Activated CD4-positive, alpha-beta T cell treated with anti-CD3 and anti-CD28 coated beads for 36 hours (primary cell): ENCODE measurements at regions of chr7 and their contacts with region 1.

Region 1: DNA sequence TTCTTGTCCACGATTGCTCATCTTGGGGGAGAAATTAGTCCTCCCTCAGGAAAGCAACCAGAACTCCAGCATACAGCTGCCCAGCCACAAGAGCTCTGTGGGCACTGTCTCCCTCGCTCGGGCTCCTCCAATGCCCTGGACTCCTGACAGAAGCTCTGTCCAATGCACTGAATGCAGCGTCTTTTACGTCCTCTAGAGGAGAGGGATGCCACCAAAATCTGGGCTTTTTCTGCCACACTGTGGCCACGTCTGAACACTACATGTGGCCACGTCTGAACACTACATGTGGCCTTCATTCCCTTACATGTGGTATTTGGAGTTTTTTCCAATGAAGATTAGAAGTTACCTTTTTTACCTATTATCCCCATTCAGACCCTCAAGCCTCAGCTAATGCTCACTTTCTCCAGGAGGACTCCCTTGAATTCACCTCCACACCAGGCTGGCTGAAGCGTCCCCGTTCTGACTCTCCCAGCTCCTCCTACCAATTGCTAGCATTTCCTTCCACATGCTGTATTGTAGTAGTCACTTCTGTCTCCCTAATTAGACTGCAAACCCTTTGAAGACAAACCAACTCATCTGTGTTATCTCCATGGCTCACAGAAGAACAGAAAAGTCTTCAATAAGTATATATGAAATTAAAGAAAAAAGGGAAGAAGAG is 134.3 kb upstream of the PDE1C start:
- DNase-seq: peak; percentile 34
- ATAC-seq: no peak
- H3K4me3 Mint-ChIP-seq: no peak overlapping the region
- H3K27ac Mint-ChIP-seq: no peak overlapping the region
- H3K4me1 Mint-ChIP-seq: no peaks in the 10 kb centered on the region
- H3K27me3 Mint-ChIP-seq: peaks cover 3% of the 10 kb centered on the region

Region 2: DNA sequence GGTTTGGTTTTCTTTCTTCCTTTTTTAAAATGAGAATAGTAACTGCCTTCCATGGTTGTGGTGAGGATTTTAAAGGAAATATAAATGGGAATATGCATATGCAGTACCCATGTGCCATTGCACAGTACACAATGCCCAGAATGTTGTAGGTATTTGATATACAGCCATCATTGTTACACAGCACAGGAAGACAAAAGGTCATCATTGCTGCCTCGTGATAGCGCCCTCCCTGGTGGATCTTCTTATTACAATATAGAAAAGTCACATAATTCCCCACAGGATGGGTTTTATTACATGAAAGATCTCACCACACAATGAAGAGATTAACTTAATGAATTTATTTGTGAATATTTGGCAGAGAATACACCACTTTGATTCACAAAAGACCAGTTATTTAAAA is 440.9 kb before region 1 on chr7:
- CTCF ChIA-PET with region 1: no interaction called
- POLR2A ChIA-PET with region 1: no interaction called
- intact Hi-C with region 1: no loop called
- DNase-seq: no peak
- ATAC-seq: no peak
- H3K4me3 Mint-ChIP-seq: no peak overlapping the region
- H3K27ac Mint-ChIP-seq: no peak overlapping the region
- H3K4me1 Mint-ChIP-seq: no peaks in the 10 kb centered on the region
- H3K27me3 Mint-ChIP-seq: no peaks in the 10 kb centered on the region

Region 3: DNA sequence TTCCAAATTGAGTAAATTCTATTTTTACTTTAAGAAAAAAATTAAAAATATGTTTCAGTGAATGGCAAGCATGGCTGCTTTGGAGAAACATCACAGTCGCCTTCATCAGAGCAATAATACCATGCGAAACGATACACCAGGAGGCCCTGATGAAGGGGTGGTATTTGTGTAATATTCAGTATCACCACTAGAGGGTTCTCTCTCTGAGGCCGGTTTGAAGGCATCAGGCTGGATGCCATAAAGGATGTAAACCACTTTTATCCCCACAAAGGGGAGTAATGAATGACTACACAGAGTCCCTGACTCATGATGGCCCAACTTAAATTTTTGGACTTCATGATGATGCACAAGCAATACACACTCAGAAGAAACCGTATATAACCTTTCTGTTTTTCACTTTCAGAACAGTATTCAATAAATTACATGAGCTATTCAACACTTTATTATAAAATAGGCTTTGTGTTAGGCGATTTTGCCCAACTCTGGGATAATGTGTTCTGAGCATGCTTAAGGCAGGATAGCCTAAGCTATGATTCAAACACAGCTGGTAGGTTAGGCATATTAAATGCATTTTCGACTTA is 422.0 kb before region 1 on chr7:
- CTCF ChIA-PET with region 1: no interaction called
- POLR2A ChIA-PET with region 1: no interaction called
- intact Hi-C with region 1: loop called in 1 of 2 experiments (anchors 10 kb)
- DNase-seq: peak; percentile 7
- ATAC-seq: peak; percentile 36
- H3K4me3 Mint-ChIP-seq: no peak overlapping the region
- H3K27ac Mint-ChIP-seq: no peak overlapping the region
- H3K4me1 Mint-ChIP-seq: no peaks in the 10 kb centered on the region
- H3K27me3 Mint-ChIP-seq: no peaks in the 10 kb centered on the region

Region 4: GRCh38 chr7:32347244-32347828 is 142.8 kb after region 1 on chr7:
- CTCF ChIA-PET with region 1: interaction called, 16 read pairs
- POLR2A ChIA-PET with region 1: no interaction called
- intact Hi-C with region 1: no loop called
- DNase-seq: peak; percentile 64
- ATAC-seq: no peak
- H3K4me3 Mint-ChIP-seq: no peak overlapping the region
- H3K27ac Mint-ChIP-seq: no peak overlapping the region
- H3K4me1 Mint-ChIP-seq: no peaks in the 10 kb centered on the region
- H3K27me3 Mint-ChIP-seq: no peaks in the 10 kb centered on the region

Region 5: GRCh38 chr7:32479574-32480200 is 275.2 kb after region 1 on chr7:
- CTCF ChIA-PET with region 1: interaction called, 13 read pairs
- POLR2A ChIA-PET with region 1: no interaction called
- intact Hi-C with region 1: no loop called
- DNase-seq: peak; percentile 27
- ATAC-seq: no peak
- H3K4me3 Mint-ChIP-seq: no peak overlapping the region
- H3K27ac Mint-ChIP-seq: no peak overlapping the region
- H3K4me1 Mint-ChIP-seq: peaks cover 6% of the 10 kb centered on the region
- H3K27me3 Mint-ChIP-seq: no peaks in the 10 kb centered on the region